HEK293 (cell line): ENCODE measurements at regions of chrX and their contacts with region 1.

Region 1: GRCh38 chrX:70096052-70096451 is 33.8 kb downstream of the OTUD6A start:
- H3K4me3 ChIP-seq: no peak overlapping the region
- H3K27ac ChIP-seq: no peak overlapping the region
- H3K4me1 ChIP-seq: no peaks in the 10 kb centered on the region
- CTCF ChIP-seq: no peak; the same call in 1 of the 2 replicates

Region 2: DNA sequence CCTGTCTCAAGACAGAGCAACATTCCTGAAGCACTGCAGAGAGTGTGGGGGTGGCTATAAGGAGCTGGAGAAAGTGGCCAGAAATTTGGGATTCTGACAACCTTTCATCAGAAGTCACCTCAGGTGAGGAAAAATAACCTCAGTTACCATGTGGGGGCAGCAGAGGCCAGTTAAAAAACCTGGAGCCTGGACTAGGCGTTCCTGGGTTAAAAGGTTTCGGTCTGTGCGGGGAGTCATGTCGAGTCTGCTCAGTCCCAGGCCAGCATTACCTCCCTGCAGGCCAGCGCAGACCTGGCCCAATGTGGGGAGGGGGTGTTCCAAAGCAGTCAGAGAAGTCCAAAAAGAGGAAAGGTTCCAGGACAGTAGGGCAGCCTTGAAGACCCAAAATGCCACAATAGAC is 602.9 kb before region 1 on chrX:
- CTCF ChIA-PET with region 1: interaction called, 60 read pairs
- POLR2A ChIA-PET with region 1: no interaction called
- H3K4me3 ChIP-seq: no peak overlapping the region
- H3K27ac ChIP-seq: no peak overlapping the region
- H3K4me1 ChIP-seq: no peaks in the 10 kb centered on the region
- CTCF ChIP-seq: peak; percentile 49

Region 3: DNA sequence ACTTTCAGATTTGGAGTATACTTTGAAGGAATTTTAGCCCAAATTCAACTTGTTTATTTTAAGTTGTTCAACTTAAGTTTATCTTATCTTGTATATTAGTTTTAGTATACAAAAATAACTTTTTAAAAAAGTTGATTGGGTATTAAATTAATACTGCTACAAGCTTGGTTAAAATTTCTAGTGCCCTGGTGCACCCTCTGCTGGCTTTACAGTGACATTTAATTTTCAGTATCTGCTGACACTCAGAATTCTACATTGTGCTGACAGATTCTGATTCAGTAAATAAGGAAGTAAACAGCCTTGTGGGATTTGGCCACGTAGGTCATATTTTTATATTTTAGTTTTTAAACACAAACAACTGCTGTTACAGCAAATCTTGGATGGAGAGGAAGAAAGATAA is 477.2 kb before region 1 on chrX:
- CTCF ChIA-PET with region 1: interaction called, 14 read pairs
- POLR2A ChIA-PET with region 1: interaction called, 3 read pairs
- H3K4me3 ChIP-seq: no peak overlapping the region
- H3K27ac ChIP-seq: no peak overlapping the region
- H3K4me1 ChIP-seq: peaks cover 3% of the 10 kb centered on the region; the same call in 1 of the 2 replicates
- CTCF ChIP-seq: peak; percentile 13; the same call in 1 of the 2 replicates

Region 4: GRCh38 chrX:69664693-69665092 is 431.4 kb before region 1 on chrX:
- CTCF ChIA-PET with region 1: no interaction called
- POLR2A ChIA-PET with region 1: no interaction called
- H3K4me3 ChIP-seq: no peak overlapping the region
- H3K27ac ChIP-seq: no peak overlapping the region
- H3K4me1 ChIP-seq: no peaks in the 10 kb centered on the region
- CTCF ChIP-seq: no peak

Region 5: DNA sequence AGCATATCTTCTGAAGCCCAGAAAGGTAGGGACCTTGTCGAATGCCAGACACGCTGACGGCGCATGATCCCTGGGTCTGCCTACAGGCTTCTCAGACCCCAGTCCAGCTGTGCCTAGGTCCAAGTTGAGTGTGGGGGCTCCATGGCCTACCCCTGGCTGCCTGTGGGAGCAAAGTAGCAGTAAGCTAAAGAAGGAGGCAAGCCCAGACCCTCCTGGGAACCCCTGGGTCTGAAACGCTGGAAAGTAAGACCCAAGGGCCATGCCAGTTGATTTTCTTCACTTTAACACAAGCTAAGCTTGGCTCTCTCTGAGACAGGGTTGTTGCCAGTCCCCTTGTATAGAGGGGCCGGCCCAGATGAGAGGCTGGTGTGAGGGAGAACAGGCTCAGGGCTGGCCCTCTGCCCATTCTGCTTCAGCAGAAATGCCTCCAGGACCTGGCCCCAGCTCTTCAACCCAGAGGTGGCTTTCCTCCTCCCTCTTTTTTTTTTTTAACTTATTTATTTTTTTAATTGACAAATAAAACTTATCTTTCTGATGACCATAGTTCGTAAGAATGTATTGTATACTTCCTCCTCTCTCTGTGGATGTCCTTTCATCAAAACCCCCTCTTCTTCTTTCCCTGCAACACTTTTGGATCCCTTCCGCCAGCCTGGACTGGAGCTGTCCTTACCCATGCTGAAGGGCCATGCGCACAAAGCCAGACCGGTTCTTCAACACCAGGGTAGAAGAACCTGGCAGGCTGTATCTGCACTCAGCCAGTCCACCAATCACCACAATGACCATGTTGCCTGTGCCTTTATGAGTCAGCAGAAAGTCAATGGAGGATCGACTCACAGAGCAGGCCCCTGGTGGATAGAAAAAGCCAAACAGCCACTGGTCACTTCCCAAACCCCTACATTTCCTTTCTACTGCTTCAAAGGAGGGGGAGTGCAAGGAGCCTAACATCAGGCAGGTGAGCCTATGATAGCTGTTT is 53.4 kb before region 1 on chrX:
- CTCF ChIA-PET with region 1: interaction called, 81 read pairs
- POLR2A ChIA-PET with region 1: no interaction called
- H3K4me3 ChIP-seq: no peak overlapping the region
- H3K27ac ChIP-seq: no peak overlapping the region
- H3K4me1 ChIP-seq: no peaks in the 10 kb centered on the region
- CTCF ChIP-seq: no peak

Region 6: DNA sequence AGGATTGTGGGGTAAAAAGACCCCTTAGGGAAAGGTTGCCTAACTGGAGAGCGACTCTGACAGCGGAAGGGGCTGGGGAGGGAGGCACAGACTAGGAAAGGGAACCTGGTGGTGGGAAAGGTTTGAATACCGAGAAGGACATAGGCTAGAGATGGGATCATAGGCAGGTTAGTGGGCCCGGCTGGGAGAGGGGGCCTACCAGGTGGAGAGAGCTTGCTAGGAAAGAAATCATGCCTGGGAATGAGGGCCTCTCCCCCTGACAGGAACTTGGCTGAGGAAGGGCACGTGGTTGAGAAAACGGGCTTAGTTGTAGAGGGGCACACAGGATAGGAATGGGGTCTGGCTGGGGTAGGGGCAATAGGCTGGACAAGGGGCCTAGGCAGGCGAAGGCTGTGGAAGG is 29.4 kb before region 1 on chrX:
- CTCF ChIA-PET with region 1: interaction called, 11 read pairs
- POLR2A ChIA-PET with region 1: no interaction called
- H3K4me3 ChIP-seq: no peak overlapping the region
- H3K27ac ChIP-seq: no peak overlapping the region
- H3K4me1 ChIP-seq: no peaks in the 10 kb centered on the region
- CTCF ChIP-seq: no peak